Caco-2 (cell line): ENCODE measurements at regions of chr11 and their contacts with region 1.

Region 1: GRCh38 chr11:92384802-92385201 is 160.2 kb downstream of the FAT3 start:
- DNase-seq: no peak
- H3K4me3 ChIP-seq: no peak overlapping the region
- H3K4me3 Mint-ChIP-seq: peak overlapping the region; percentile 7
- H3K27ac Mint-ChIP-seq: no peak overlapping the region
- H3K4me1 ChIP-seq: peaks cover 16% of the 10 kb centered on the region
- H3K4me1 Mint-ChIP-seq: peaks cover 14% of the 10 kb centered on the region
- H3K27me3 ChIP-seq: no peaks in the 10 kb centered on the region
- H3K27me3 Mint-ChIP-seq: no peaks in the 10 kb centered on the region
- CTCF ChIP-seq: no peak

Region 2: DNA sequence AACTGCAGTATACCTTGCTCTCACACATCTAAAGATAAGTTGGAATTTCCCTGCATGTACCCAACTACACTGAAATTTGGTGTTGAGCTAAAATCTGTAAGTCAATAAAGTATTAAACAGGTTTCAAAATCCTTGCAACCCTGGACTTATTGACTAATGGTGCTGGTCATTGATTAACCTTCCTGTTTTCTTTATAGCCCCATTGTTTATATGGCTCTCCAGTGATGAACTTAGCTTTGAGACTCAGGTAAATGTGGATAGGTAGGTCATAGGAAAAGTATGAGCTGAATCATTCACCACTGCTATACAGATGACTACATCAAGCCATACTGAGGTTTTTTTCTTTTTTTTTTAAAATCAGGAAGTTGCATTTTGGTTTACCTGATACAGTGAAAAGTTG is 27.5 kb before region 1 on chr11:
- CTCF ChIA-PET with region 1: no interaction called
- POLR2A ChIA-PET with region 1: no interaction called
- intact Hi-C with region 1: loop called (anchors 1 kb)
- DNase-seq: peak in 1 of 2 experiments; percentile 31
- H3K4me3 ChIP-seq: no peak overlapping the region
- H3K4me3 Mint-ChIP-seq: no peak overlapping the region
- H3K27ac Mint-ChIP-seq: no peak overlapping the region
- H3K4me1 ChIP-seq: peaks cover 8% of the 10 kb centered on the region
- H3K4me1 Mint-ChIP-seq: peaks cover 5% of the 10 kb centered on the region
- H3K27me3 ChIP-seq: no peaks in the 10 kb centered on the region
- H3K27me3 Mint-ChIP-seq: no peaks in the 10 kb centered on the region
- CTCF ChIP-seq: no peak

Region 3: DNA sequence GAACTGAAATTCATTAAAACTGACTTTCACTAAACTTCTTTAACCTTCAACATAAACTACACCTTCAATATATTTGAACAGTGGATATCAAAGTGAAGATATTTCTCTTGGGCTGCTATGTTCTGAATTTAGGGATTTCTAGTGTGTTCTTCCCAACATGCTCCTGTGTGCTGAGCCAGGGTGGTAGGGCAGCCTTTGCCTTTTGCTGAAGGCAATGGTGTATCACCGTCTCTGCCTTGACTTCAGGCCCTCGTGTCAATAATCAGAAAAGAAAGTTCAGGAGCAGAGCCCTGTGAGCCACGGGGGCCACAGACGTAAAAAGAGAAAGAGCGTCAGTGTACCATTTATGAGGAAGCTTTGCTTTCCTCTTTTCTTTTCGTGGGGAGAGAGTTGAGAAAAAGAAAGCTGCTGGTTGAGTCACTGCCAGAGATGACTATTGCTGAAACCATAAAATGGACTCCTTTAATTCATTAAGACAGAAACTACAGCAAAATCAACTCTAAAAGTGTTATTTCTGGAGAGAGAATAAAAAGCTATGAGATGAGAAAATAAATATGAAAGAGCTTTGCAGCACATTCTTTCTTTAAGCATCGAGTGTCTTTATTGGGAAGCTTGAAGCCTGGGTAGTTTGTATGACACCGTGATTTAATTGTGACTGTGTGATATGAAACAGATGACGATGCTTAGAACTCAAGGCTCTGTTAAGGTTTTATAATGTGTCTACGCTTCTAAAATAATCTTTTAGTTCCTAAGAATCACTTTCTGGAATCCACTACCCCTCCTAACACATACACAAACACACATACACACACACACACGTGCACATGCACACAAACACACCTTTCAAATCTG is 312.9 kb after region 1 on chr11:
- CTCF ChIA-PET with region 1: no interaction called
- POLR2A ChIA-PET with region 1: no interaction called
- intact Hi-C with region 1: no loop called
- DNase-seq: no peak
- H3K4me3 ChIP-seq: no peak overlapping the region
- H3K4me3 Mint-ChIP-seq: no peak overlapping the region
- H3K27ac Mint-ChIP-seq: no peak overlapping the region
- H3K4me1 ChIP-seq: no peaks in the 10 kb centered on the region
- H3K4me1 Mint-ChIP-seq: no peaks in the 10 kb centered on the region
- H3K27me3 ChIP-seq: 0 out of 2 replicates have a peak, but pooled peaks cover 1% of the 10 kb centered on the region
- H3K27me3 Mint-ChIP-seq: peaks cover 13% of the 10 kb centered on the region
- CTCF ChIP-seq: no peak